ENCODE measurements at regions of chr5 and their contacts with region 1.

Region 1: DNA sequence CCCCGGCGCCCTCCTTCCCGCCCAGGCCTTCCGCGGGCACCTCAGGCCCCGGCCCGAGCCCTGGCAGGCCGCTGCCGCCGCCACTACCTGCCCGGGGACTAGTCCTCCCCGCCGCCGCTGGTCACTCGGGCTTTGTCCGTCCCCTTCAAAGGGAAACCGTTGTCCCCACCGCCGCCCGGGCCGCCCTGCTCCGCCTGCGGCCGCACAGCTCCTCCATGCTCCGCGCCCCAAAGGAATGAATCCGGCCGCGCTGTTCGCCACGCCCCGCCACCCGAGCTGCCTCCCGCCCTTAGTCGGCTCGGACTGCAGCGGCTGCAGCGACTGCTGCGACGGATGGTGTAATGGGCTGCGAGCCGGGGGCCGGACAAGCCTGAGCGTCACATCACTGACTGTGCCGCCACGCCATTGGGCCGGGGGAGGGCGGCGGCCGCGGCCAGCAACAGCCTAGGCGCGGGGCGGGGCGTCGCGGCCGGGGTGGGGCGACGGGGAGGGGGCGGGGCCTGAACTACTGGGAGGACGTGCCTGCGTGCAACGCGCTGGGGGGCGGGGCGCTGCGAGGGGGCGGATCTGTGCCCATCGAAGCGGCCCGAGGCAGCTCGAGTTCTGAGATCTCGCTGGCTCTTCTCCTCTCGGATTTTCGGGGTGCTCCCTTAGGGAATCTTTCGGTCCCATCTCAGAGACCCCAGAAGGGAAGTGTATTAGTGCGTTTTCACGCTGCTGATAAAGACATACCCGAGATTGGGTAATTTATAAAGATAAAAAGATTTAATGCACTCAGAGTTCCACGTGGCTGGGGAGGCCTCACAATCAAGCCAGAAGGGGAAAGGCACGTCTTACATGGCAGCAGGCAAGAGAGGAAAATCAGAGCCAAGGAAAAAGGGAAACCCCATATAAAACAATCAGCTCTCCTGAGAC is at the start of gene FEM1C:
- DNase-seq: peak; percentile 99
- total RNA-seq, gene FEM1C: 56.1 TPM

Region 2: GRCh38 chr5:115423541-115423940 is 121.2 kb before region 1 on chr5:
- intact Hi-C with region 1: loop called (anchors 1 kb)
- DNase-seq: peak; percentile 86

Region 3: GRCh38 chr5:115625579-115626444 is 81.1 kb after region 1 on chr5 and contains the start of gene TMED7:
- intact Hi-C with region 1: loop called (anchors 2 kb)
- DNase-seq: peak; percentile 100
- total RNA-seq, gene TMED7: 79.1 TPM

Region 4: DNA sequence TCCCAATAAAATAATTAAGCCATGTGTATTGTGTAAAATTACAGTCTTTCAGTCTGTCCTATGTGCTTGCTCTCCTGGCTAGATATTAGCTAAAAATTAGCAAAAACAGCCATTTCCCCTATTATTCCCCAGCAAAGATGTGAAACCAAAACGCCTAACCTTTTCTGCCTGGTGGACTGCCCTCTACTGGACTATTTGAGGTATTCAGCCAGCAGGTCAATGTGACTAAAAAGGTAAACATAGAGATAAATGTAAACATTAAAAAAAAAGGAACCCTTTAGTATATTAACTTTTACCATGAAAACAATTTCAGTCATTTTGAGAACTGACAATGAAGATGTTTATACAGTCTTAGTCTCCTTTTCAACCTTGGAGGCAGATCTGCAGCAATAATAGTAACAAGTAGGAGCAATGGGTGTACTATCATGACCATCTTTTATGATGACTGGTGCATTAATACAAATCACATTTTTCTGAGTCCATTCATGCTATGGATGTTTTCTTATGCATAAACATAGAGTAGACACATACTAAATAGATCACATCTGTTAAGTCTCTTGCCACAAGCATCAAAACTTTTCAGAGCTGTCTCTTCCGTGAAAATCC is 286.6 kb after region 1 on chr5:
- intact Hi-C with region 1: loop called (anchors 10 kb)
- DNase-seq: no peak